OCI-LY7 (cell line): ENCODE measurements at regions of chr14 and their contacts with region 1.

Region 1: DNA sequence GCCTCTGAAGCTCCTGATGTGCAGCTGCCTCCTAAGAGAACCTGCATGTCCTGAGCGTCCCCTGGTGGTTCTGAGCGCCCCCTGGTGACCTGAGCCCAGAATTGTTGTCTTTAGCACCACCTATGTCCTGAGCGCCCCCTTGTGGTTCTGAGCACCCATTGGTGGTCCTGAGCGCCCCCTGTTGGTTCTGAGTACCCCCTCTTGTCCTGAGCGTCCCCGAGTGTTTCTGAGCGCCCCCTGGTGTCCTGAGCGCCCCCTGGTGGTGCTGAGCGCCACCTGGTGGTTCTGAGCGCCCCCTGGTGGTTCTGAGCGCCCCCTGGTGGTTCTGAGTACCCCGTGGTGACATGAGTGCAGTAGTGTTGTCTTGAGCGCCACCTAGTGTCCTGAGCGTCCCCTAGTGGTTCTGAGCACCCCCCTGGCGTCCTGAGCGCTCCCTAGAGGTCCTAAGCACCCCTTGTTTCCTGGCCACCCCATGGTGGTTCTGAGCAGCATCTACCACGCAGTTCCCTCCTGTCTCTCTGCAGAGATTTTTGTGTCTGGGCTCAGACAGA is 782.5 kb downstream of the TMEM121 start:
- DNase-seq: peak; percentile 80
- H3K4me3 ChIP-seq: no peak overlapping the region
- H3K27ac ChIP-seq: no peak overlapping the region
- H3K4me1 ChIP-seq: peaks cover 27% of the 10 kb centered on the region
- CTCF ChIP-seq: peak; percentile 100

Region 2: DNA sequence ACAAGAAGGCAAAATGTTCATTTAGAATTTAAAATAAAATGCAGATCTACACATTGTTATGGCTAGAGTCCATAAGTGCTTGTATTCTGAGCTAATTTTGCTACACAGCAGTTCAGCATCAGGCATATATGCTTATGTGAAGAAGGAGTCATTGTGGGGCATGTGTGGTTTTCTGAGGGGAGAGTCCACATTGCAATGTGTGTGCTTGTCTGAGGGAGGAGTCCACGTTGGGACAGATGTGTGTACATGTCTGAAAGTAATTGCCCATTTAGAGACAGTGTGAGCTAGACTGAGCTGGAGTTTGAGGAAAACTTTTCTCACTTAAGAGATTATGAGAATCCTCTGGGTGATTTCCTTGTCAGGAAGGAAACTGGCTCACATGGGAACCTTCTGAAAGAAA is 14.6 kb before region 1 on chr14:
- CTCF ChIA-PET with region 1: no interaction called
- POLR2A ChIA-PET with region 1: no interaction called
- intact Hi-C with region 1: loop called (anchors 2 kb)
- DNase-seq: no peak
- H3K4me3 ChIP-seq: no peak overlapping the region
- H3K27ac ChIP-seq: no peak overlapping the region
- H3K4me1 ChIP-seq: peaks cover 18% of the 10 kb centered on the region
- CTCF ChIP-seq: no peak

Region 3: GRCh38 chr14:106347890-106348755 is 39.2 kb after region 1 on chr14:
- CTCF ChIA-PET with region 1: no interaction called
- POLR2A ChIA-PET with region 1: no interaction called
- intact Hi-C with region 1: loop called (anchors 5 kb)
- DNase-seq: no peak
- H3K4me3 ChIP-seq: peak overlapping the region; percentile 70
- H3K27ac ChIP-seq: peak overlapping the region; percentile 88
- H3K4me1 ChIP-seq: peaks cover 70% of the 10 kb centered on the region
- CTCF ChIP-seq: no peak

Region 4: GRCh38 chr14:106665814-106666213 is 356.9 kb after region 1 on chr14:
- CTCF ChIA-PET with region 1: no interaction called
- POLR2A ChIA-PET with region 1: no interaction called
- intact Hi-C with region 1: loop called (anchors 5 kb)
- DNase-seq: no peak
- H3K4me3 ChIP-seq: no peak overlapping the region
- H3K27ac ChIP-seq: no peak overlapping the region
- H3K4me1 ChIP-seq: no peaks in the 10 kb centered on the region
- CTCF ChIP-seq: no peak